Motor neuron (in vitro differentiated cells): ENCODE measurements at regions of chr11 and their contacts with region 1.

Region 1: GRCh38 chr11:108713076-108713790 is 48.4 kb downstream of the DDX10 start:
- ATAC-seq: peak in 2 of 8 experiments; percentile 52 to 58
- H3K4me3 ChIP-seq: no peak overlapping the region
- H3K27ac ChIP-seq: no peak overlapping the region
- H3K4me1 ChIP-seq: no peaks in the 10 kb centered on the region

Region 2: GRCh38 chr11:108871152-108871551 is 157.9 kb after region 1 on chr11:
- in situ Hi-C with region 1: loop called in 2 of 9 experiments (anchors 25 kb)
- ATAC-seq: peak in 3 of 8 experiments; percentile 31 to 64 (median 32)
- H3K4me3 ChIP-seq: no peak overlapping the region
- H3K27ac ChIP-seq: no peak overlapping the region
- H3K4me1 ChIP-seq: no peaks in the 10 kb centered on the region

Region 3: DNA sequence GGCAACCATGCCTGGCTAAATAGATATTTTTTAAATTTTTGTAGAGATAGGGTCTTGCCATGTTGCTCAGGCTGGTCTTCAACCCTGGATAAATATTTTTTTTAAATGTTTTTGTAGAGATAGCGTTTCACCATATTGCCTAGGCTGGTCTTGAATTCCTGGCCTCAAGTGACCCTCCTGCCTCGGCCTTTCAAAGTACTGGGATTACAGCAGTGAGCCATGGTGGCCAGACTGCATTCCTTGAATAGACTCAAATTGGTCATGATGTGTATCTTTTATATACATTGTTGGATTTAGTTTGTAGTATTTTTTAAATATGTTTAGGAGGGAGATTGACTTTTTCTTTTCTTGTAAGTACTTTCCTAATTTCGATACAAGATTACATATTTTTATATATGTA is 383.0 kb after region 1 on chr11:
- in situ Hi-C with region 1: no loop called
- ATAC-seq: no peak
- H3K4me3 ChIP-seq: no peak overlapping the region
- H3K27ac ChIP-seq: no peak overlapping the region
- H3K4me1 ChIP-seq: peaks cover 0 to 7% of the 10 kb centered on the region in 2 donors

Region 4: DNA sequence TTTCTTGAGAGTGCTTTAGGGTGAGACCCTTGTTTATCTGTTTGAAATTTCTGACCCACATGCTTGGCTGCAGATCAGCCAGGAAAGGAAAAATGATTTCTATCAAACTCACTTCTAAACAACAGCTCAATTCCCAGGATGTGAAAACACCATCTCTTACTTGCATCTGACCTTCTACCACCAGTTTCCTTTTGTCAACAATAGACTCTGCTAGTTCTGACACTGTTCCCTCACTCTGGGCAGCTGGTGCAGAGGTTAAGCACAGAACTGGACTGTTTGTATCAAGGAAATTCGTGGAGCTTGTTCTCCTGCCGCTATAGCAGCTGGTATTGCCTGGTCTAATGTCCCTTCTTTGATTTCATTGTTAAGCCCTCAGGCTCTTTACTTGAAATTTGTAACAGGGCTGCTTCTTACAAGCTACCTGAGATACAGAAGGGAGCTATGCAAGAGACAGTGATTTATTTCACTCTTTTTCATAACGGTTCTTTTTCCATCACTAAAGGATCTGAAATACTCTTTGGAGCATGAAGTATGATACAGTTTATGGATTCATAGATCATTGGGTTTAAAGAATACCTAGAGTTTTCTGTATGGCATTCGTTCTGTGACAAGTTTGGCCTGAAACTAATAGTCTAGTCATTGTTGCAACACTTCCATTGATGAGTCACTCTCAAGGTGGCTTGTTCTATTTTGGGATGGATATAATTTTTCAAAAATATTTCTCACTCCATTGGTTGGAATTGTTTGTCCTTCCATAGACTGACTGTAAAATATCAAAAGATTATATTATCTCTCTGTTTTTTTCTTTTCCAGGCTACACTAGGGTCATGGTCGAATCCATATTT is 1201.8 kb after region 1 on chr11:
- in situ Hi-C with region 1: loop called in 1 of 9 experiments (anchors 25 kb)
- ATAC-seq: peak in 1 of 8 experiments; percentile 57
- H3K4me3 ChIP-seq: no peak overlapping the region
- H3K27ac ChIP-seq: no peak overlapping the region
- H3K4me1 ChIP-seq: no peaks in the 10 kb centered on the region

Region 5: GRCh38 chr11:109946322-109946846 is 1233.2 kb after region 1 on chr11:
- in situ Hi-C with region 1: loop called in 3 of 9 experiments (anchors 25 kb)
- ATAC-seq: peak; percentile 96 to 100 (median 100)
- H3K4me3 ChIP-seq: peak overlapping the region in 3 of 5 donors; percentile 5 to 16 (median 9)
- H3K27ac ChIP-seq: no peak overlapping the region
- H3K4me1 ChIP-seq: peaks cover 0 to 5% of the 10 kb centered on the region in 2 donors